HCT116 (cell line): ENCODE measurements at regions of chr19 and their contacts with region 1.

Region 1: GRCh38 chr19:17346109-17346671 is 8.8 kb downstream of the GTPBP3 start:
- DNase-seq: peak; percentile 60
- ATAC-seq: peak; percentile 94
- H3K4me3 ChIP-seq: no peak overlapping the region
- H3K27ac ChIP-seq: peak overlapping the region; percentile 28; the same call in 1 of the 2 replicates
- H3K4me1 ChIP-seq: peaks cover 18 to 31% of the 10 kb centered on the region in 2 experiments; a peak in 3 of 4 replicates
- H3K27me3 ChIP-seq: no peaks in the 10 kb centered on the region
- CTCF ChIP-seq: peak in 2 of 3 experiments; percentile 83 to 91
- POLR2A ChIP-seq: no peak
- RAD21 ChIP-seq: peak; percentile 86

Region 2: DNA sequence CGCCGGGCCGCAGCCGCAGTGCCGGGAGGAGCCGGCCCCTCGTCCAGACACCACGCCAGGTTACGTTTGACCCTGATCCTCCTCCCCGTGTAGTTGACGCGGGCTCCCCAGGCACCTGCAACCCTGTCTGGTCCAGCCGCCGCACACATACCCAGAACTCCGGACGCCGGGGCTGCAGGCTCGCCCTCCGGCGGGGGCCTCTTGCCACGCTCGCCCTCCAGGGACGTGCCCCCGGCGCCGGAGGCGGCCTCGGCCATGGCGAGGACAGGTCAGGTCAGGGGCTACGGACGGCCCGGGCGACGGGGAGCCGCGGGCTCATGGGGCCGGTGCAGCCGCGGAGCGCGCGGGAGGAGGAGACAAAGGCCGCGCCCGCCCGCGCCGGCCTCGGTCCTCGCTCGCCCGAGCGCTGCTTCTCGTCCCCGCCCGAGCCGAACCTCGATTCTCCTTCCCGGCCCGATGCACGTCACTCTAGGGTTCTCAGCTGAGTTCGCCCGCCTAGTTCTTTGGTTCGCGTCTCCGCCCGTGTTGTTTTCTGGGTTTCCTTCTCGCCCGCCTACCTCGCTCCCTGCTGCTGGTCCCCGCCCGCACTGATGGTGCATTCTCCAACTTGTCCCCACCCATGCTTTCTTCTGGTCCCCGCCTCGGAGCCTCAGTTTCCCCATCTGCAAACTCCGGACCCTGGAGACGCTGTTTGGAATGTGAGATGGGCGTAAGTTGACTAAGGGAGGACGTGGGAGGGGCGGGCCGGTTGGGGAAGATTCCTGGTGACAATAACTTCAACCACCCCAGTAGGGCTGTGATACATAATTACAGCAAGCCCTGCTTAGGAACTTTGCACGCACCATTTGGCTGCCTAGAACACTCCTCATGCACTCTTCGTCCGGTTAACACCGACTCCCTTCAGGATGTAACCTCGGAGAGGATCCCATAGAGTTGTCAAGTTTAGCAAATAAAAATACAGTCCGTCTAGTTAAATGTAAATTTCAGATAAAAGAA is 11.5 kb before region 1 on chr19 and contains the start of gene ANO8:
- CTCF ChIA-PET with region 1: interaction called, 5 read pairs
- POLR2A ChIA-PET with region 1: interaction called, 12 read pairs
- RAD21 ChIA-PET with region 1: no interaction called
- intact Hi-C with region 1: no loop called
- DNase-seq: peak; percentile 99
- ATAC-seq: peak; percentile 55
- H3K4me3 ChIP-seq: peak within 1 kb of the TSS; percentile 72 to 99
- H3K27ac ChIP-seq: peak within 1 kb of the TSS; percentile 93
- H3K4me1 ChIP-seq: peaks cover 32 to 53% of the 10 kb centered on the region in 2 experiments
- H3K27me3 ChIP-seq: no peaks in the 10 kb centered on the region
- CTCF ChIP-seq: no peak
- POLR2A ChIP-seq: peak; percentile 21
- RAD21 ChIP-seq: no peak
- total RNA-seq, gene ANO8: 22.9 TPM

Region 3: DNA sequence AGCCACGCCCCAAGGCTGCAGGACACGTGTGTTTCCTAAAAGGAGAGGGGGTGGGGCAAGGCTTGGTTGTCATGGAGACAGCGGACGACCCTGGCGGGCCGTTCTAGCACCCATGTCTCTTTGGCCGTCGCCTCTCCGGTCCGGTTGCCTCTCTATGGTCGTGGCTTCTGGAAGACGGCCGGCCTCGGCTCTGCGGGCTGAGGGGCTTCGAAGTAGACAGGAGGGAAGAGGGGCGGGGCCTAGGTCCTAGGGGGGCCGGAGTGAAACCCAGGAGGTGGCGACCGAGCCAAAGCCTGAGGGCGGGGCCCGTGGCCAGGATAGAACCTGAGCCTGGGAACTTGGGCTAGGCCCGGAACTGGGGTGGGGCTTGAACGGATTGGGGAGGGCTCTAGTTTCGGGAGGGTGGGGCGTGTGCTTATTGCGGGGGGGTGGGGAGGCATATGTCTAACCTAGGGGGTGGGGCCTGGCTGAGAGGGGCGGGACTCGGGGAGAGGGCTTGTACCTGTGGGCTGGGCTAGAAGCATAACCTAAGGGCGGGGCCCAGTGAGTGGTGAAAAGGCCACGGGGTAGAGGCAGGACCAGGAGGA is 123.4 kb after region 1 on chr19:
- CTCF ChIA-PET with region 1: no interaction called
- POLR2A ChIA-PET with region 1: no interaction called
- RAD21 ChIA-PET with region 1: no interaction called
- intact Hi-C with region 1: loop called (anchors 2 kb)
- DNase-seq: peak; percentile 96
- ATAC-seq: peak; percentile 73
- H3K4me3 ChIP-seq: peak overlapping the region; percentile 66 to 78
- H3K27ac ChIP-seq: peak overlapping the region; percentile 83
- H3K4me1 ChIP-seq: peaks cover 37 to 67% of the 10 kb centered on the region in 2 experiments
- H3K27me3 ChIP-seq: no peaks in the 10 kb centered on the region
- CTCF ChIP-seq: no peak
- POLR2A ChIP-seq: no peak
- RAD21 ChIP-seq: no peak